ENCODE measurements at regions of chr2 and their contacts with region 1.

Region 1: DNA sequence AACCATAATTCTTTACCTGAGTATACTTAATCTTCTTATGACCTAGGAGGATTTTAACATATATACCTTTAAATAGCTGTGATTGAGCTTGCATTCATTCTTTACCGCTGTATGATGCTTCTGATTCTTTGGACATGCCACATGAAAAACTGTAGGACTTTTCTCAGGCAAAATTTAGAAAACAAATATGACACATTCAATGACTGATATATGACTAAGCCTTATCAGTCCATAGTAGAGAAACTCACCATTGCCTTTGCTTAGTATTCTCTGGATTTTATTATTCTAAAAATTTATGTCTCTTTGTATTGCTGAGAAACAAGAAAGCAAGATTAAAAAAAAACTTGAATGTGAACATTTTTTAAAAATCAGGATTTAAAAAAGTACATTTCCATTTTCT is 3.7 kb downstream of the FAM171B start:
- DNase-seq: no peak
- ATAC-seq: no peak
- H3K4me3 ChIP-seq: no peak overlapping the region
- H3K27ac ChIP-seq: no peak overlapping the region
- H3K4me1 ChIP-seq: no peaks in the 10 kb centered on the region
- H3K27me3 ChIP-seq: no peaks in the 10 kb centered on the region
- CTCF ChIP-seq: no peak
- EP300 ChIP-seq: no peak
- POLR2A ChIP-seq: no peak
- RAD21 ChIP-seq: no peak

Region 2: GRCh38 chr2:186709529-186710450 is 12.3 kb after region 1 on chr2:
- CTCF ChIA-PET with region 1: interaction called, 10 read pairs
- POLR2A ChIA-PET with region 1: interaction called, 3 read pairs
- RAD21 ChIA-PET with region 1: interaction called, 4 read pairs
- SMC1A ChIA-PET with region 1: interaction called, 8 read pairs
- in situ Hi-C with region 1: no loop called
- intact Hi-C with region 1: no loop called
- DNase-seq: no peak
- ATAC-seq: peak; percentile 73
- H3K4me3 ChIP-seq: no peak overlapping the region
- H3K27ac ChIP-seq: no peak overlapping the region
- H3K4me1 ChIP-seq: no peaks in the 10 kb centered on the region
- H3K27me3 ChIP-seq: no peaks in the 10 kb centered on the region
- CTCF ChIP-seq: no peak
- EP300 ChIP-seq: no peak
- POLR2A ChIP-seq: no peak
- RAD21 ChIP-seq: no peak

Measured in GM12878 (cell line).